Aorta (tissue), 5 donors: ENCODE measurements at regions of chr19 and their contacts with region 1.

Region 1: DNA sequence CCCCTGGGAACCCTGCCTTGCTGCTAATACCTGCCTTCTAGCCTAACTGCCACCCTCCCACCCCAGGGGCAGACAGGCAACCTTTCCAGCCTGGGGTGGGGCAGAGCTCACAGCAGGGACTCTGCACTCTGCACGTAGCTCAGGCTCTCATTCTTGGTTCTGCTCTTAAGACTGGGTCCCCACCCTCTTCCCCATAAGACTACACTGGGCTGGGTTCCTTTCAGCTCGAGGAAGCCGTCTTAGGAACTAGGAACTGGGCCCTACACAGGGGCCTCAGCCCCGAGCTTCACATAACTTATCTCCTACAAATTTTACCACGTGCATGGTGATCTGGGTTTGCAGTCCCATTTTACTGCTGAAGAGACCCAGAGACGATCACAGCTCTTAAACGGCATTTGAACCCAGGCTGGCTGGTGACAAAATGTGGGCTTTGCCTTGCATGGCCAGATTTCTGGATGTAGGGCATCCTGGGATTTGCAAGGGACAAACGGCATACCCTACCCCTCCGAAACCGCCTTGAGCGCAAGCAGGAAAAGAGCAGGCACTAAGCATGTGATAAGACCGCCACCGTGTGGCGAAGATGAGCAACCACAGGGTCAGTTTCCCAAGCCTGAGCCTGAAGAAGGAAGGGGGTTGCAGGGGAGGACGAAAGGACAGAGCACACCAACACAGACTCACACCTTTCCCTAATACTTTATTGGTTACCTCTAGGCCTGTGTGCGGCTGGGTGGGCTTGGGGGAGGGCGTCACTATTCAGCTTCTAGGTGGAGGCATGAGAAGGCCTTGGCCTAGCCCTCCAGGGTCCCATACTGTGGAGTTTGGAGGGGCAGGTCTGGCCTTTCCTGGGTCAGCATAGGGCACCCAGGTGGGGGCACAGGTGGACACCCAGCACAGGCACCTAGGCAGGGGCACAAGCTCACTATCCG is 5.1 kb downstream of the JUNB start:
- DNase-seq: peak; percentile 83 to 90
- ATAC-seq: peak; percentile 55
- H3K4me3 ChIP-seq: no peak overlapping the region
- H3K27ac ChIP-seq: peak overlapping the region in 1 of 2 donors; percentile 34
- H3K4me1 ChIP-seq: no peaks in the 10 kb centered on the region
- H3K27me3 ChIP-seq: peaks cover 0 to 2% of the 10 kb centered on the region in 2 donors

Region 2: DNA sequence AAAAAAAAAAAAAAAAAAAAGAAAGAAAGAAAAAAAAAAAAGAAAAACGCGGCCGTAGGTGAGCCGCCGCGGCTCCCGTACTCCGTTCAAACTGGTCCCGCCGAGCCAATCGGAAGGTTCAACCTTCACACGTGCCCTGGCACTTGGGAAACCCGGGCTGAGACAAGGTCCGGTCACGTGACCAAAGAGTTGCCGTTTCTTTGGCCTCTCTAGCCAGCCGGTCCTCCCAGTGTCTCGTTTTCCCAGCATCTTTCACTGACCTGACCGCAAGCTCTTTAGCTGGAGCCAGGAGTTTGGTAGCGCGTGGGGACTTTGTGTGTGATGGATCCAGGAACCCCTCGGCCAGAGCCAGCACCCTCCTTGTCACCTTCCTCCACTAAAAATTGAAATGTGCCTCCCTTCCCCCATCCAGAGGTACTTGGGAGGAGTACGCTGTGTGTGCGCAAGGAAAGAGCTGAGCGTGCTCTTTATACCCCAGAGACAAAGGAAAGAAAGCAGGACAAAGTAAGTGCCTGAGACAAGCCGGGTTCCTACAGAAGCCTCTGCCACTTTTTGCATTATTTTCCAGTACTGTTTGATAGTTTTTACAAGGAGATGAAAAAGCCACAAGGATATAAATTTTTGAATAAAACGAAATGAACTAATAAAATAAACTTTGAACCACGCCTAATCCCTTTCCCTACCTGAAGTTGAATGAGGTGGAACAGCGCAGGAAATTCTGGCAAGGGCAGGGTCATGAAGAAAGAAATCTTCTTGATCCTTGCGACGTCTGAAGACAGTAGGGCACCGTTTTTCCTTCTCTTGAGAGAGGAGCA is 73.6 kb before region 1 on chr19:
- intact Hi-C with region 1: loop called in 1 of 2 experiments (anchors 5 kb)
- DNase-seq: peak; percentile 98
- ATAC-seq: peak; percentile 96
- H3K4me3 ChIP-seq: peak overlapping the region; percentile 68 to 97
- H3K27ac ChIP-seq: peak overlapping the region; percentile 59 to 70
- H3K4me1 ChIP-seq: no peaks in the 10 kb centered on the region
- H3K27me3 ChIP-seq: no peaks in the 10 kb centered on the region

Region 3: DNA sequence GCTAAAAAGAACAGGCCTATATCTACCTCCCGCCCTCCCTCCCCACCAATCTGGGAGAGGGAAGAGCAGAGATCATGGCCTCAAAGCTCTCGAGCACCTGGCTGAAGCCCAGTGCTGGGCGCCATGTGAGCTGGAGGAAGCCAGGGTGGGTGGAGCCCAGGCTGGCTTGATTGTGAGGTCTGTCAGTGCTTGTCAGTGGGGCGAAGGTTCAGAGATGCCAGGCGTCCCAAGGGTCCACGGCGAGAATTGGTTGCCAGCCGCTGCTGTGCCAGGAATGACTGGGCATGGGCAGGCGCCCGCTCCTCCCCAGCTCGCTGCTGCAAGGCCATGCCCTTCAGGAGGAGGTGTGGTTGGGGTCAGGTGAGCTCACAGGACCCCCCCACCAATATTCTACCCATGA is 33.3 kb before region 1 on chr19:
- intact Hi-C with region 1: loop called (anchors 5 kb)
- DNase-seq: no peak
- ATAC-seq: no peak
- H3K4me3 ChIP-seq: no peak overlapping the region
- H3K27ac ChIP-seq: no peak overlapping the region
- H3K4me1 ChIP-seq: no peaks in the 10 kb centered on the region
- H3K27me3 ChIP-seq: no peaks in the 10 kb centered on the region

Region 4: GRCh38 chr19:12777217-12778016 is 19.0 kb before region 1 on chr19:
- intact Hi-C with region 1: loop called (anchors 1 kb)
- DNase-seq: peak; percentile 89 to 95
- ATAC-seq: peak; percentile 85
- H3K4me3 ChIP-seq: peak overlapping the region; percentile 19 to 55
- H3K27ac ChIP-seq: peak overlapping the region; percentile 83 to 84
- H3K4me1 ChIP-seq: no peaks in the 10 kb centered on the region
- H3K27me3 ChIP-seq: no peaks in the 10 kb centered on the region